HepG2 (cell line): ENCODE measurements at regions of chr1 and their contacts with region 1.

Region 1: GRCh38 chr1:207321079-207321789 is at the start of gene CD55:
- DNase-seq: peak; percentile 91
- ATAC-seq: peak; percentile 95
- H3K4me3 ChIP-seq: peak within 1 kb of the TSS; percentile 72 to 91 (median 83)
- H3K27ac ChIP-seq: peak within 1 kb of the TSS; percentile 55
- H3K4me1 ChIP-seq: peaks cover 14% of the 10 kb centered on the region; the same call in 1 of the 2 replicates
- H3K27me3 ChIP-seq: no peaks in the 10 kb centered on the region; a peak in 2 of 5 replicates
- CTCF ChIP-seq: peak; percentile 52
- EP300 ChIP-seq: no peak
- POLR2A ChIP-seq: peak in 1 of 2 experiments; percentile 69; a peak in 1 of 4 replicates
- RAD21 ChIP-seq: no peak; the same call in 1 of the 2 replicates
- total RNA-seq, gene CD55: 2.7 and 6.0 TPM in 2 replicates

Region 2: GRCh38 chr1:207103892-207104373 is 217.3 kb before region 1 on chr1 and contains the start of gene C4BPA:
- CTCF ChIA-PET with region 1: no interaction called
- POLR2A ChIA-PET with region 1: interaction called, 12 read pairs
- in situ Hi-C with region 1: no loop called
- intact Hi-C with region 1: no loop called
- DNase-seq: peak; percentile 90
- ATAC-seq: peak; percentile 97
- H3K4me3 ChIP-seq: no peak within 1 kb of the TSS
- H3K27ac ChIP-seq: peak within 1 kb of the TSS; percentile 52
- H3K4me1 ChIP-seq: peaks cover 36% of the 10 kb centered on the region
- H3K27me3 ChIP-seq: no peaks in the 10 kb centered on the region
- CTCF ChIP-seq: no peak
- EP300 ChIP-seq: peak in 1 of 2 experiments; percentile 51; a peak in 2 of 4 replicates
- POLR2A ChIP-seq: no peak
- RAD21 ChIP-seq: no peak
- total RNA-seq, gene C4BPA: 18.7 and 32.1 TPM in 2 replicates

Region 3: GRCh38 chr1:207240325-207241095 is 80.7 kb before region 1 on chr1:
- CTCF ChIA-PET with region 1: no interaction called
- POLR2A ChIA-PET with region 1: interaction called, 11 read pairs
- in situ Hi-C with region 1: no loop called
- intact Hi-C with region 1: loop called (anchors 1 kb)
- DNase-seq: peak; percentile 74
- ATAC-seq: peak; percentile 58
- H3K4me3 ChIP-seq: no peak overlapping the region; a peak in 3 of 6 replicates
- H3K27ac ChIP-seq: peak overlapping the region; percentile 87
- H3K4me1 ChIP-seq: peaks cover 46% of the 10 kb centered on the region
- H3K27me3 ChIP-seq: no peaks in the 10 kb centered on the region
- CTCF ChIP-seq: no peak
- EP300 ChIP-seq: no peak
- POLR2A ChIP-seq: no peak
- RAD21 ChIP-seq: no peak

Region 4: DNA sequence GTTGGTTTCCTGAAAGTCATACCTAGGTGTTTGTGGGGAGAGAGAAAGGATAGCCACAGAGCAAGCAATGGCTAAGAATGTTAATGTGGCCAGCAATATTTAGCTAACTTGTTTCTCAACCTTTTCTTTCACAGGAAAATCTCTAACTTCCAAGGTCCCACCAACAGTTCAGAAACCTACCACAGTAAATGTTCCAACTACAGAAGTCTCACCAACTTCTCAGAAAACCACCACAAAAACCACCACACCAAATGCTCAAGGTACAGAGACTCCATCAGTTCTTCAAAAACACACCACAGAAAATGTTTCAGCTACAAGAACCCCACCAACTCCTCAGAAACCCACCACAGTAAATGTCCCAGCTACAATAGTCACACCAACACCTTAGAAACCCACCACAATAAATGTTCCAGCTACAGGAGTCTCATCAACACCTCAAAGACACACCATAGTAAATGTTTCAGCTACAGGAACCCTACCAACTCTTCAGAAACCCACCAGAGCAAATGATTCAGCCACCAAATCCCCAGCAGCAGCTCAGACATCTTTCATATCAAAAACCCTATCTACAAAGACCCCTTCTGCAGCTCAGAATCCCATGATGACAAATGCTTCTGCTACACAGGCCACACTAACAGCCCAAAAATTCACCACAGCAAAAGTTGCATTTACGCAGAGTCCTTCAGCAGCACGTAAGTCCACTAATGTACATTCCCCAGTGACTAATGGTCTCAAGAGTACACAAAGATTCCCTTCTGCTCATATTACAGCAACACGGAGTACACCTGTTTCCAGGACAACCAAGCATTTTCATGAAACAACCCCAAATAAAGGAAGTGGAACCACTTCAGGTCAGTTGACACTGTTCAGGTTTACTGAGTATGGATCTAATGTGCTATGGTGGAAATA is 15.6 kb after region 1 on chr1:
- CTCF ChIA-PET with region 1: no interaction called
- POLR2A ChIA-PET with region 1: interaction called, 25 read pairs
- in situ Hi-C with region 1: no loop called
- intact Hi-C with region 1: no loop called
- DNase-seq: peak; percentile 58
- ATAC-seq: peak; percentile 82
- H3K4me3 ChIP-seq: no peak overlapping the region
- H3K27ac ChIP-seq: no peak overlapping the region
- H3K4me1 ChIP-seq: peaks cover 11% of the 10 kb centered on the region
- H3K27me3 ChIP-seq: no peaks in the 10 kb centered on the region
- CTCF ChIP-seq: no peak
- EP300 ChIP-seq: 0 out of 4 replicates have a peak, but pooled peaks of 1 of the 2 experiments have one; percentile 21
- POLR2A ChIP-seq: no peak
- RAD21 ChIP-seq: no peak

Region 5: GRCh38 chr1:207404849-207405525 is 83.8 kb after region 1 on chr1:
- CTCF ChIA-PET with region 1: no interaction called
- POLR2A ChIA-PET with region 1: interaction called, 10 read pairs
- in situ Hi-C with region 1: no loop called
- intact Hi-C with region 1: loop called (anchors 5 kb)
- DNase-seq: peak; percentile 81
- ATAC-seq: peak; percentile 90
- H3K4me3 ChIP-seq: no peak overlapping the region
- H3K27ac ChIP-seq: no peak overlapping the region
- H3K4me1 ChIP-seq: no peaks in the 10 kb centered on the region
- H3K27me3 ChIP-seq: no peaks in the 10 kb centered on the region
- CTCF ChIP-seq: peak; percentile 82
- EP300 ChIP-seq: no peak
- POLR2A ChIP-seq: no peak
- RAD21 ChIP-seq: peak; percentile 69

Region 6: GRCh38 chr1:207486198-207486597 is 165.0 kb after region 1 on chr1:
- CTCF ChIA-PET with region 1: no interaction called
- POLR2A ChIA-PET with region 1: no interaction called
- in situ Hi-C with region 1: no loop called
- intact Hi-C with region 1: no loop called
- DNase-seq: no peak
- ATAC-seq: no peak
- H3K4me3 ChIP-seq: no peak overlapping the region
- H3K27ac ChIP-seq: no peak overlapping the region
- H3K4me1 ChIP-seq: no peaks in the 10 kb centered on the region
- H3K27me3 ChIP-seq: no peaks in the 10 kb centered on the region; a peak in 1 of 5 replicates
- CTCF ChIP-seq: no peak
- EP300 ChIP-seq: no peak
- POLR2A ChIP-seq: no peak
- RAD21 ChIP-seq: no peak